ENCODE measurements at regions of chr10 and their contacts with region 1.

Region 1: GRCh38 chr10:33330543-33331378 is 3.7 kb downstream of the NRP1 start:
- DNase-seq: peak; percentile 92
- H3K4me3 Mint-ChIP-seq: no peak overlapping the region
- H3K27ac Mint-ChIP-seq: no peak overlapping the region
- H3K4me1 Mint-ChIP-seq: peaks cover 16% of the 10 kb centered on the region
- H3K27me3 Mint-ChIP-seq: peaks cover 41% of the 10 kb centered on the region

Region 2: GRCh38 chr10:33193057-33193700 is 137.6 kb before region 1 on chr10:
- CTCF ChIA-PET with region 1: interaction called, 23 read pairs
- intact Hi-C with region 1: loop called (anchors 1 kb)
- DNase-seq: peak; percentile 89
- H3K4me3 Mint-ChIP-seq: no peak overlapping the region
- H3K27ac Mint-ChIP-seq: no peak overlapping the region
- H3K4me1 Mint-ChIP-seq: no peaks in the 10 kb centered on the region
- H3K27me3 Mint-ChIP-seq: peaks cover 4% of the 10 kb centered on the region

Region 3: DNA sequence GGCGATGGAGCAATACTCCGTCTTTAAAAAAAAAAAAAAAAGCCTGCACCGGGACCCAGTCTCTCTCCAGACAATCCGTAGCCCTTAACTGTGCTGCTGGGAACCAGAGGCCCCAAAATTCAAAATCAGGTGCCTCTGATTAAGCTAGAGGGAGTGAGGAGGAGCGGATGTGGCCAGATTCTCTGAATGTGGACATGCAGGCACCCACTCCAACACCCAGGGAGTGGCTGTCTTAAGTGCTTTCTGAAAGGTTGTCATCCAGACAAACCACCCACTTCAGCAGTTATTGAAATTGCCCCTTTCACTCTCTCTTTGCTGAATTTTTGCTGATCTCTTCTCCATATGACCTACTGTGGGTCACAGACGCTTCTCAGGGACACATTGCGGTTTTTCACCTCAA is 10.5 kb before region 1 on chr10:
- CTCF ChIA-PET with region 1: no interaction called
- intact Hi-C with region 1: no loop called
- DNase-seq: no peak
- H3K4me3 Mint-ChIP-seq: no peak overlapping the region
- H3K27ac Mint-ChIP-seq: no peak overlapping the region
- H3K4me1 Mint-ChIP-seq: no peaks in the 10 kb centered on the region
- H3K27me3 Mint-ChIP-seq: peaks cover 6% of the 10 kb centered on the region

Region 4: GRCh38 chr10:33473688-33474087 is 142.9 kb after region 1 on chr10:
- CTCF ChIA-PET with region 1: interaction called, 3 read pairs
- intact Hi-C with region 1: loop called (anchors 5 kb)
- DNase-seq: no peak
- H3K4me3 Mint-ChIP-seq: no peak overlapping the region
- H3K27ac Mint-ChIP-seq: no peak overlapping the region
- H3K4me1 Mint-ChIP-seq: no peaks in the 10 kb centered on the region
- H3K27me3 Mint-ChIP-seq: peaks cover 15% of the 10 kb centered on the region

Region 5: GRCh38 chr10:34223658-34224057 is 892.9 kb after region 1 on chr10:
- CTCF ChIA-PET with region 1: no interaction called
- intact Hi-C with region 1: loop called (anchors 5 kb)
- DNase-seq: peak; percentile 28
- H3K4me3 Mint-ChIP-seq: no peak overlapping the region
- H3K27ac Mint-ChIP-seq: no peak overlapping the region
- H3K4me1 Mint-ChIP-seq: peaks cover 17% of the 10 kb centered on the region
- H3K27me3 Mint-ChIP-seq: peaks cover 3% of the 10 kb centered on the region

Region 6: GRCh38 chr10:34637418-34637911 is 1306.7 kb after region 1 on chr10:
- CTCF ChIA-PET with region 1: interaction called, 3 read pairs
- intact Hi-C with region 1: loop called (anchors 1 kb)
- DNase-seq: peak; percentile 78
- H3K4me3 Mint-ChIP-seq: no peak overlapping the region
- H3K27ac Mint-ChIP-seq: no peak overlapping the region
- H3K4me1 Mint-ChIP-seq: peaks cover 8% of the 10 kb centered on the region
- H3K27me3 Mint-ChIP-seq: no peaks in the 10 kb centered on the region